ENCODE measurements at regions of chr6 and their contacts with region 1.

Region 1: GRCh38 chr6:13480631-13481501 is 6.5 kb downstream of the GFOD1 start:
- DNase-seq: peak; percentile 75 to 83
- ATAC-seq: peak; percentile 90 to 95
- H3K4me3 ChIP-seq: no peak overlapping the region
- H3K27ac ChIP-seq: peak overlapping the region; percentile 73 to 78 (median 76)
- H3K4me1 ChIP-seq: peaks cover 55 to 56% of the 10 kb centered on the region in 2 donors
- H3K27me3 ChIP-seq: no peaks in the 10 kb centered on the region
- CTCF ChIP-seq: no peak
- POLR2A ChIP-seq: no peak

Region 2: GRCh38 chr6:13466304-13467215 is 14.3 kb before region 1 on chr6:
- in situ Hi-C with region 1: no loop called
- intact Hi-C with region 1: loop called (anchors 2 kb)
- DNase-seq: no peak
- ATAC-seq: peak in 1 of 2 donors; percentile 42
- H3K4me3 ChIP-seq: peak overlapping the region in 2 of 4 donors; percentile 0 to 17
- H3K27ac ChIP-seq: peak overlapping the region; percentile 43 to 67 (median 53)
- H3K4me1 ChIP-seq: peaks cover 20 to 36% of the 10 kb centered on the region in 2 donors
- H3K27me3 ChIP-seq: no peaks in the 10 kb centered on the region
- CTCF ChIP-seq: no peak
- POLR2A ChIP-seq: no peak

Region 3: GRCh38 chr6:13604546-13605416 is 123.9 kb after region 1 on chr6:
- in situ Hi-C with region 1: no loop called
- intact Hi-C with region 1: no loop called
- DNase-seq: no peak
- ATAC-seq: no peak
- H3K4me3 ChIP-seq: no peak overlapping the region
- H3K27ac ChIP-seq: no peak overlapping the region
- H3K4me1 ChIP-seq: no peaks in the 10 kb centered on the region
- H3K27me3 ChIP-seq: no peaks in the 10 kb centered on the region
- CTCF ChIP-seq: no peak
- POLR2A ChIP-seq: no peak

Measured in gastrocnemius medialis (tissue), 4 donors.